ENCODE measurements at regions of chr2 and their contacts with region 1.

Region 1: GRCh38 chr2:20682167-20682920 is 15.4 kb downstream of the GDF7 start:
- DNase-seq: peak in 1 of 2 experiments; percentile 58
- H3K4me3 ChIP-seq: no peak overlapping the region
- H3K4me3 Mint-ChIP-seq: no peak overlapping the region
- H3K27ac Mint-ChIP-seq: no peak overlapping the region
- H3K4me1 ChIP-seq: no peaks in the 10 kb centered on the region
- H3K4me1 Mint-ChIP-seq: no peaks in the 10 kb centered on the region
- H3K27me3 ChIP-seq: no peaks in the 10 kb centered on the region
- H3K27me3 Mint-ChIP-seq: no peaks in the 10 kb centered on the region
- CTCF ChIP-seq: peak; percentile 53 to 82

Region 2: GRCh38 chr2:20755132-20755800 is 72.9 kb after region 1 on chr2:
- CTCF ChIA-PET with region 1: interaction called, 3 read pairs
- POLR2A ChIA-PET with region 1: no interaction called
- intact Hi-C with region 1: loop called (anchors 1 kb)
- DNase-seq: no peak
- H3K4me3 ChIP-seq: no peak overlapping the region
- H3K4me3 Mint-ChIP-seq: no peak overlapping the region
- H3K27ac Mint-ChIP-seq: no peak overlapping the region
- H3K4me1 ChIP-seq: 0 out of 2 replicates have a peak, but pooled peaks cover 4% of the 10 kb centered on the region
- H3K4me1 Mint-ChIP-seq: peaks cover 7% of the 10 kb centered on the region
- H3K27me3 ChIP-seq: no peaks in the 10 kb centered on the region
- H3K27me3 Mint-ChIP-seq: no peaks in the 10 kb centered on the region
- CTCF ChIP-seq: no peak

Region 3: GRCh38 chr2:20962939-20963557 is 280.7 kb after region 1 on chr2:
- CTCF ChIA-PET with region 1: interaction called, 22 read pairs
- POLR2A ChIA-PET with region 1: no interaction called
- intact Hi-C with region 1: loop called (anchors 1 kb)
- DNase-seq: peak; percentile 73 to 80
- H3K4me3 ChIP-seq: no peak overlapping the region
- H3K4me3 Mint-ChIP-seq: no peak overlapping the region
- H3K27ac Mint-ChIP-seq: no peak overlapping the region
- H3K4me1 ChIP-seq: no peaks in the 10 kb centered on the region
- H3K4me1 Mint-ChIP-seq: no peaks in the 10 kb centered on the region
- H3K27me3 ChIP-seq: no peaks in the 10 kb centered on the region; the same call in 1 of the 2 replicates
- H3K27me3 Mint-ChIP-seq: peaks cover 5% of the 10 kb centered on the region
- CTCF ChIP-seq: peak; percentile 83 to 90

Measured in Caco-2 (cell line).